ENCODE measurements at regions of chr5 and their contacts with region 1.

Region 1: DNA sequence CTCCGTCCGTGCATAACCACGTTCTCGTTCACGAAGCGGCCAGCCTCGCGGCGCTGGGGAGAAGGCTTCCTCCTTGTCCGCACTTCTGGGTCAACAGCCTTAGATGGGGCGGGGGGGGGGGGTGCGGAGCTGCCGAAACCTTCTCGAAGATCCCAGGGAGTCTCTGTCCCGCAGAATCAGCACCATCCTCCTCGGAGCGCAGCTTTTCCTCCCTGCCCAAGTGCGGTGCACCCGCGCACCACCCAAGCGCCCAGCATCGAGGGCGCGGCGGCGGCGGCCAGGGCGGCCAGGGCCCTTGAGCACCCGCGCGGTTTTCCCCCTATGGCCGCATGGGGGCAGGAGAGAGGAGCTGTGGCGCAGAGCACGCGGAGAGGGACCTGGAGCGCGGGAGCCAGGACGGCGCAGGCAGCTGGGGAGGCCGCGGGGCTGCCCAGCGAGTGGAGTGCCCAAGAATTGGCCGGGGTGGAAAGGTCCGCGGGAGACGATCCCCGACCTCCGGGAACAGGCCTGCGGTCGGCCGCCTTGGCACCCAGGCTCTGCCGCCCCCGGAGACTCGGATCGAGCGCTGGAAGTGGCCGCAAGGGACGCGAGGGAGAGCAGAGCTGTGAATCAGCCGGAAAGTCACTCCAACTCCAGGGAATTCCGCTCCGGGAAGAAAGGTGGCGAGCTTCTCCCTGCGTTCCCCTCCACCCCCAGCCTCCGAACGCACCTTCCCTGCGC is 43.1 kb downstream of the TMEM174 start:
- DNase-seq: peak; percentile 72
- ATAC-seq: peak; percentile 92
- H3K4me3 ChIP-seq: peak overlapping the region; percentile 30 to 53
- H3K27ac ChIP-seq: peak overlapping the region; percentile 41; the same call in 1 of the 2 replicates
- H3K4me1 ChIP-seq: peaks cover 8 to 32% of the 10 kb centered on the region in 2 experiments; a peak in 3 of 4 replicates
- H3K27me3 ChIP-seq: no peaks in the 10 kb centered on the region
- CTCF ChIP-seq: peak; percentile 76 to 93 (median 82)
- POLR2A ChIP-seq: no peak
- RAD21 ChIP-seq: peak; percentile 76

Region 2: GRCh38 chr5:72920690-72921502 is 295.2 kb before region 1 on chr5:
- CTCF ChIA-PET with region 1: interaction called, 24 read pairs
- POLR2A ChIA-PET with region 1: no interaction called
- RAD21 ChIA-PET with region 1: interaction called in 1 of 2 experiments, 6 read pairs
- intact Hi-C with region 1: loop called (anchors 5 kb)
- DNase-seq: peak; percentile 26
- ATAC-seq: peak; percentile 84
- H3K4me3 ChIP-seq: no peak overlapping the region
- H3K27ac ChIP-seq: no peak overlapping the region
- H3K4me1 ChIP-seq: no peaks in the 10 kb centered on the region
- H3K27me3 ChIP-seq: no peaks in the 10 kb centered on the region
- CTCF ChIP-seq: peak; percentile 25 to 70 (median 66); a peak in 5 of 6 replicates
- POLR2A ChIP-seq: no peak
- RAD21 ChIP-seq: peak; percentile 84

Region 3: GRCh38 chr5:73088026-73088425 is 128.0 kb before region 1 on chr5:
- CTCF ChIA-PET with region 1: interaction called, 10 read pairs
- POLR2A ChIA-PET with region 1: no interaction called
- RAD21 ChIA-PET with region 1: no interaction called
- intact Hi-C with region 1: loop called (anchors 2 kb)
- DNase-seq: no peak
- ATAC-seq: no peak
- H3K4me3 ChIP-seq: no peak overlapping the region
- H3K27ac ChIP-seq: no peak overlapping the region
- H3K4me1 ChIP-seq: peaks cover 0 to 2% of the 10 kb centered on the region in 2 experiments; a peak in 1 of 4 replicates
- H3K27me3 ChIP-seq: no peaks in the 10 kb centered on the region
- CTCF ChIP-seq: no peak
- POLR2A ChIP-seq: no peak
- RAD21 ChIP-seq: no peak

Region 4: DNA sequence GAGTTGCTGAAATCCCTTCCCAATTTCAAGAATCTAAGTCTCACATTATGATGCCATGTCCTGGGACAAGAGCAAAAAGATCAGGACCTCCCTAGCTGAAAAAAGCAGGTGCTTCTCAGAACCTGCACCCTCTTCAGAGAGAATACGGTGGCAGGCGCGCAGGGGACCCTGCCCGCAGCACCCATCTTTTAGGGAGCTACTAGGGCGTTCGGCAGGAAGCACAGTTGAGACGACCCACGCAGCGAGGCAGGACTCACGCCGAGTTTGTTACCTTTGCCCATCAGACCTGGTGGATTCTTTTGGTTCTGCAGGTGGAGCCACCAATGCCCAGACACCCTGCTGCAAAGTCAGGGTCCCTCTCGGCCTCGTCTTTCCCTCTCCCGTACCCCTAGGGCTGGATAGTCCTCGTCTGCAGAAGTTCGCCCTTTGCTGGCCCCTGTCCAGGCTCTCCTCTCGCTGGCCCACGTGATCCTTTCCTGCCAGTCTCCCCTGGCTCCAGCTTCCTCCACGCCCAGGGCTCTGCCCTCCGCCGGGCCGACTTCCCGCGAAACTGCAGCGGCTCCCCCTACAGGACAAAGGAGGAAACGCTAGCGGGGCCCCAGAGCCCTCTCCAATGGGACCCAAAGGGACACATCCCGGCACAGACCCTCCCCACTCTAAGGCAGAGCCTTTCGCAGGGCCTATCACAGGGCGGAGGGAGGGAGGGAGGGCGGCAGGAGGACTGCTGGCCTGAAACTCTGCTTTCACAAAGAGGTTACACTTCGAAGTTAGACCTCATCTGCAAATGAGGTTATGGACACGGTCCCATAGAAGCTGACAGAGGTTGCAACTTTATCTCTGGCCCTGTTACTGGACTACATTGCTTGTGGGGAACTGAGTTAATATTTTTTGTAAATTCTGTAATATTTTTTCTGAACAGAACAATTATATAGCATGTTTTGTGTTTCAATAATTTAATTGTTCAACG is 14.2 kb before region 1 on chr5:
- CTCF ChIA-PET with region 1: interaction called, 71 read pairs
- POLR2A ChIA-PET with region 1: interaction called, 4 read pairs
- RAD21 ChIA-PET with region 1: interaction called, 3 read pairs
- intact Hi-C with region 1: no loop called
- DNase-seq: peak; percentile 78
- ATAC-seq: peak; percentile 98
- H3K4me3 ChIP-seq: no peak overlapping the region
- H3K27ac ChIP-seq: no peak overlapping the region
- H3K4me1 ChIP-seq: peaks cover 0 to 13% of the 10 kb centered on the region in 2 experiments; a peak in 3 of 4 replicates
- H3K27me3 ChIP-seq: no peaks in the 10 kb centered on the region
- CTCF ChIP-seq: peak; percentile 81 to 94 (median 87)
- POLR2A ChIP-seq: no peak
- RAD21 ChIP-seq: peak; percentile 89

Region 5: GRCh38 chr5:73370640-73371583 is 154.9 kb after region 1 on chr5:
- CTCF ChIA-PET with region 1: no interaction called
- POLR2A ChIA-PET with region 1: no interaction called
- RAD21 ChIA-PET with region 1: no interaction called
- intact Hi-C with region 1: no loop called
- DNase-seq: peak; percentile 94
- ATAC-seq: peak; percentile 96
- H3K4me3 ChIP-seq: peak overlapping the region; percentile 1 to 44; a peak in 2 of 4 replicates
- H3K27ac ChIP-seq: peak overlapping the region; percentile 69
- H3K4me1 ChIP-seq: peaks cover 13 to 56% of the 10 kb centered on the region in 2 experiments
- H3K27me3 ChIP-seq: no peaks in the 10 kb centered on the region
- CTCF ChIP-seq: no peak
- POLR2A ChIP-seq: no peak
- RAD21 ChIP-seq: peak; percentile 41; the same call in 1 of the 2 replicates

Region 6: DNA sequence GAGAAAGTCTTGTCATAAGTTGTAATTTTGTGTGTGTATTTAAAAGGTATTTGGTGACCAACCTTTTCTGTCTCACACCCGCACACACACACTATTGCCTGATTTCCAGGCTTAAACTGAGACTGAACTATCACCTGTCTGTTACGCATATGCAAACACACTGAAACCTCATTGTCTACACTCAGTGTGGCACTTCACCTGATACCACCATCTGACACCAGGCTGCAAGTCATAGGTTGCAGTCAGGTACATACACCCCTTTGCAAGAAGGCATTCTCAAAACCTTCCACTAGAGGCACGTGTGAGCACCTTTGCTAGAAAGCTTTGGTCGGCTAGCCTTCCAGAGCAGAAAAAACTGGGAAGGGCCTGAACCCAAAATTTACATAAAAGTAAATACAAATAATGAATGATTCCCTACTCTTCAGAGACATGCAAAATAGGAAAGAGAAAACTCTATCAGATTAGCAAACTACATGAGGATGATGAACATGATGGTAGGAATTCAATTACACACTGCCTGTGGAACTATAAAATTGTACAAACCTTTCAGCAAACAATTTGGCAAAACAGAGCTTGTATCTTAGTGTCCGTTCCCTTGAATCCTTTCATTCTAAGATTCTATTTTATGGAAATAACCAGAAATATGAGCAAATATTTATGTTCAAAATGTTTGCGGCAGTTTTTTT is 238.4 kb after region 1 on chr5:
- CTCF ChIA-PET with region 1: interaction called, 23 read pairs
- POLR2A ChIA-PET with region 1: interaction called, 4 read pairs
- RAD21 ChIA-PET with region 1: interaction called in 1 of 2 experiments, 9 read pairs
- intact Hi-C with region 1: loop called (anchors 2 kb)
- DNase-seq: peak; percentile 86
- ATAC-seq: peak; percentile 90
- H3K4me3 ChIP-seq: no peak overlapping the region
- H3K27ac ChIP-seq: no peak overlapping the region
- H3K4me1 ChIP-seq: peaks cover 0 to 20% of the 10 kb centered on the region in 2 experiments; a peak in 2 of 4 replicates
- H3K27me3 ChIP-seq: no peaks in the 10 kb centered on the region
- CTCF ChIP-seq: peak; percentile 51 to 89 (median 78); a peak in 5 of 6 replicates
- POLR2A ChIP-seq: no peak
- RAD21 ChIP-seq: peak; percentile 48